ENCODE measurements at regions of chr6 and their contacts with region 1.

Region 1: DNA sequence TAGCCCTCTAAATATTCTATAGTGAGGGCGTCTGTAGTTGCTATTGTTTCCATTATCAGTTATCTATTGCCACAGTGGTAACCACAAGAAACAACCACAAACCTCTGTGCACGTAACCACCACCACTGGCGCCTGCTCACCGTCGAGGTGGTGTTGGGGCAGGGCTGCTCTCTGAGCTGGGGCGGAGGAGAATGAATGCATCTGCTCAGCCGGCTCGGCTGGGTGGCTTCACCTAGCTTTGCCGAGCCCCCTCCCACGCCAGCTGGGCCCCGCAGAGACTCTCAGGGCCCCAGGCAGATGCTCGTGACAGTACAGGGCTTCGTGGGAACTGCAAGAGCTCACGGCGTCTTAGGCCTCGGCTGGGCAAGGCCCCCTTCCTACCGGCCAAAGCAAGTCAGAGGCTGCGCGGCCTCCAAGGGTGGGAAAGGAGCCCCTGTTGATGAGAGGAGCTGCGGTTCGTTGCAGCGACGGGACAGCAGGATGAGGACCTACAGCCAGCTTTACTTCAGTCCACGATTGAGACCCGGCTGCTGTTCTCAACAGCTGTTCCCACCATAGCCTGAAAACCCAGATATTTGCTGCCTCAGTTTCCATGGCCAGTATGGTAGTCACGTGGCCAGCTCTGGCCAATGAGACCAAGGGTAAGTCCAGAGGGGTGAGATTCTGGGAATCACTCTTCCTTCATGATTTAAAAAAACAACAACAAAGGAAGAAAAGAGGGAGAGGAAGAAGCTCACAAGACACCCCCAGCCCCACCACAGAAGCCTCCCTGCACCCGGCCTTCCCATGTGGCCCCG is 120.2 kb upstream of the AFDN start:
- DNase-seq: peak; percentile 77
- H3K4me3 Mint-ChIP-seq: no peak overlapping the region
- H3K27ac Mint-ChIP-seq: peak overlapping the region; percentile 70
- H3K4me1 Mint-ChIP-seq: peaks cover 27% of the 10 kb centered on the region
- H3K27me3 Mint-ChIP-seq: peaks cover 69% of the 10 kb centered on the region

Region 2: DNA sequence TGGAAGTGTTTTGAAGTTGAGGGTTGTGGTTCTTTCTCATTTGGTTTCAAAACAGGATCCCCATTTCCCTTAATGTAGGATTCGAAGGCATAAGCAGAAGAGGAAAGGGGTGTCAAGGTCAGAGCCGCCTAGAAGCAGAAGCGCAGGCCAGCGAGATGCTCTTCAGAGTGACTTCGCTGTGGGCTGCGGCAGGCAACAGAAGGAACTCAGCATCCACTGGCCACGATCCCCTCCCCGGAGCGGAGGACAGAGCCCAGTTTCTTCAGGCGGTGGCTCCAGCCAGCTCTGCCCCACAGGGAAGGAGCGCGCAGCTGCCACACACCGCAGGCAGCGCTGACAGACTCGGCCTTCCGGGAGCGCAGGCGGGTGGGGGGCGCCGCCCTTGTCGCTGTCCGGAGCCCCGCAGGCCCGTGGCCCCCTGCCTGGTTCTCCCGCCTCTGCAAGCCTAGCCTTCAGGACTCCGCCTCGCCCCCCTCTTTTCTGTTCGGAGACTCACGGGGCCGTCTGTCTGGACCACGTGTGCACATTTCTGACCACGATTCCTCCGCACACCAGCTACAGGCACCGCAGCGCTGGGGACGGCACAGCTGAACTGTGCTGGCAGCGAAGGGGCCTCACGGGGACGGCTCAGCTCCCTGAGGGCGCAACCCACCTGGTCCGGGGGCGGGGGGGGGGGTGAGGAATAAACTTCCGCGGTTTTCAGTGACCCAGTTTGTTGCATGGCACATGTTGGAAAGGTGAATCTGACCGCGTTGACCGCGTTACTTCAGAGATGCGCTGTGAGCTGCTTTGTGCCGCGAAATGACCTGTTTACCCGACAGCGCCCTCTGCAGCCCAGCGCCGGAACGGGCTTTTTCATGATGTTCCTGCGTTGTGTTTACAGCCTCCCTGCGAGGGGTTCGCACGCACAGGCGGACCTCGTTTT is 355.5 kb before region 1 on chr6:
- intact Hi-C with region 1: loop called (anchors 5 kb)
- DNase-seq: peak; percentile 79
- H3K4me3 Mint-ChIP-seq: peak overlapping the region; percentile 79
- H3K27ac Mint-ChIP-seq: peak overlapping the region; percentile 84
- H3K4me1 Mint-ChIP-seq: peaks cover 15% of the 10 kb centered on the region
- H3K27me3 Mint-ChIP-seq: peaks cover 32% of the 10 kb centered on the region

Region 3: GRCh38 chr6:167826230-167826895 is 119.9 kb after region 1 on chr6:
- intact Hi-C with region 1: loop called (anchors 5 kb)
- DNase-seq: peak; percentile 59
- H3K4me3 Mint-ChIP-seq: peak overlapping the region; percentile 83
- H3K27ac Mint-ChIP-seq: no peak overlapping the region
- H3K4me1 Mint-ChIP-seq: peaks cover 28% of the 10 kb centered on the region
- H3K27me3 Mint-ChIP-seq: peaks cover 72% of the 10 kb centered on the region

Measured in activated T-helper 2 cell treated with anti-CD3 and anti-CD28 coated beads, Interferon-gamma antibody, Interleukin-2, Interleukin-4, amounts not matched to agents 10 μg/mL and 5 μg/mL and 100 μg/mL, durations not matched to agents 14 hours and 24 hours and 36 hours (primary cell).